ENCODE measurements at regions of chr20 and their contacts with region 1.

Region 1: DNA sequence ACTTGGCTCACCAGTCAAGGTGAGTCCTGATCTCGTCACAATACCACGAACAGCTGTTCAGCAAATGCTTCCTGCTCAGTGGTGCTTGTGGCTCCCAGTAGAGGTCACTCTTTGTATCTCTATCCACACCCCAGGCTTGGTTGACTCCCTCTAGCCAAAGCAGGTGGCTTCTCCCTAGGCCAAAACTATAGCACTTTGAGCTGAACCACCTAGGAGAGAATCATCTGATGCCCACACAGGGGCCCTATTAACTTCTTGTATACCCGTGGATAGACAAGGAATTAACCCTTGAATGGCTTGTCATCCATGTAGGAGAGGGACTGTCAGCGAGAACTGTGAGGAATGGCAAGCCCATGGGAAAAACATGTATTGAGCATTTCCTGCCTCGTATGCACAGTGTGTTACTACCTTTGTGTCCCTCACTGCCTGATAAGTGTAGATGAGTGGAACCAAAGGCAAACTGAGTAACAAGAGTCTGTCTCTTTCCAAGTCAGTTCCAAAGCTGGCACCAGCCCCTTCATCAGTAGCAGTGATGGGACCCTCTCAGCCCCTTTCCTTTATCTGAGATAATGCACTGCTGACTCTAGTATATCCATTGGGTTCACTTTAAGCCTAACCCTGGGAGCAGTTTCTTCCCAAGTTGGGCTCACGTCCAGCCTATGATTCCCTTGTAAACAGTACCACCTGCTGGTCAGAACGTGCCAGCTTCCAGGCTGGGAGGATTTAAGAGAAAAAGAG is 42.5 kb downstream of the EIF2S2 start:
- DNase-seq: peak; percentile 57 to 86 (median 78)
- H3K4me3 ChIP-seq: no peak overlapping the region
- H3K27ac ChIP-seq: peak overlapping the region in 31 of 59 donors; percentile 2 to 67 (median 37)
- H3K27me3 ChIP-seq: no peaks in the 10 kb centered on the region
- CTCF ChIP-seq: peak; percentile 80 to 96 (median 90)

Region 2: GRCh38 chr20:33862709-33863403 is 206.7 kb before region 1 on chr20:
- intact Hi-C with region 1: loop called (anchors 2 to 5 kb)
- DNase-seq: peak; percentile 11 to 68 (median 58)
- H3K4me3 ChIP-seq: peak overlapping the region in 39 of 59 donors; percentile 2 to 52 (median 24)
- H3K27ac ChIP-seq: peak overlapping the region in 2 of 59 donors; percentile 11 to 20
- H3K27me3 ChIP-seq: no peaks in the 10 kb centered on the region
- CTCF ChIP-seq: peak; percentile 43 to 86 (median 71)

Region 3: DNA sequence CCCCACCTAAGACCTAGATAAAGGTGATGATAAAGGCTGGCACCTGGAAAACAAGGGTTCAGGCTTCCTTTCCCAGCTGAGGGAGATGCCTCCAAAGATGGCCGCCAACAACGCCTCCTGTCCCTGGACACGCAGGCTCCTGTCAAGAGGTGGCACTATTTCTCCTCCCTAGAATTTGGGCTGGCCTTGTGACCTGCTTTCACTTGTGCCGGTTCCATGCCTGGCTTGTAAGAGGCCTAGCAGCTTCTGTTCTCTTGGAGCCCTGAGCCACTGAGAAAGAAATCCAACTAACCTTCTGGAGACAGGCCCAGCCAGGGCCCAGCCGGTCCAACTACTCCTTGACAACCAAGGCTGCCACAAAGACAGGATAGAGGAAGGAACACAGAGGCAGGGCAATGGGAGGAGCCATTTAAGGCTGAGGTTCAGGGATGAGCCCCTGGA is 136.0 kb before region 1 on chr20:
- intact Hi-C with region 1: loop called (anchors 1 to 5 kb)
- DNase-seq: peak; percentile 30 to 78 (median 68)
- H3K4me3 ChIP-seq: no peak overlapping the region
- H3K27ac ChIP-seq: peak overlapping the region in 47 of 59 donors; percentile 4 to 86 (median 60)
- H3K27me3 ChIP-seq: no peaks in the 10 kb centered on the region
- CTCF ChIP-seq: peak in 55 of 56 donors; percentile 30 to 87 (median 68)

Region 4: GRCh38 chr20:33992923-33993575 is 76.5 kb before region 1 on chr20:
- intact Hi-C with region 1: loop called (anchors 2 to 5 kb)
- DNase-seq: peak; percentile 99 to 100 (median 99)
- H3K4me3 ChIP-seq: peak overlapping the region; percentile 77 to 99 (median 93)
- H3K27ac ChIP-seq: peak overlapping the region; percentile 88 to 100 (median 97)
- H3K27me3 ChIP-seq: no peaks in the 10 kb centered on the region
- CTCF ChIP-seq: peak in 33 of 56 donors; percentile 1 to 52 (median 29)

Region 5: GRCh38 chr20:34129518-34130162 is 60.1 kb after region 1 on chr20:
- intact Hi-C with region 1: loop called in 1 of 2 experiments (anchors 2 kb)
- DNase-seq: peak in 8 of 10 donors; percentile 22 to 73 (median 59)
- H3K4me3 ChIP-seq: peak overlapping the region in 56 of 59 donors; percentile 18 to 62 (median 46)
- H3K27ac ChIP-seq: peak overlapping the region in 2 of 59 donors; percentile 14 to 36
- H3K27me3 ChIP-seq: no peaks in the 10 kb centered on the region
- CTCF ChIP-seq: peak; percentile 74 to 97 (median 88)

Region 6: GRCh38 chr20:34397096-34397495 is 327.6 kb after region 1 on chr20:
- intact Hi-C with region 1: no loop called
- DNase-seq: no peak
- H3K4me3 ChIP-seq: no peak overlapping the region
- H3K27ac ChIP-seq: peak overlapping the region in 8 of 59 donors; percentile 2 to 57 (median 30)
- H3K27me3 ChIP-seq: no peaks in the 10 kb centered on the region
- CTCF ChIP-seq: no peak

Measured in dorsolateral prefrontal cortex (tissue), 120 donors.